Activated T-helper 1 cell treated with anti-CD3 and anti-CD28 coated beads, Interleukin-12 subunit alpha, Interleukin-12 subunit beta, Interleukin-2, Interleukin-4 antibody, amounts not matched to agents 30 ng/mL and 10 ng/mL and 1 ng/mL, durations not matched to agents 14 hours and 24 hours and 36 hours (primary cell): ENCODE measurements at regions of chr11 and their contacts with region 1.

Region 1: DNA sequence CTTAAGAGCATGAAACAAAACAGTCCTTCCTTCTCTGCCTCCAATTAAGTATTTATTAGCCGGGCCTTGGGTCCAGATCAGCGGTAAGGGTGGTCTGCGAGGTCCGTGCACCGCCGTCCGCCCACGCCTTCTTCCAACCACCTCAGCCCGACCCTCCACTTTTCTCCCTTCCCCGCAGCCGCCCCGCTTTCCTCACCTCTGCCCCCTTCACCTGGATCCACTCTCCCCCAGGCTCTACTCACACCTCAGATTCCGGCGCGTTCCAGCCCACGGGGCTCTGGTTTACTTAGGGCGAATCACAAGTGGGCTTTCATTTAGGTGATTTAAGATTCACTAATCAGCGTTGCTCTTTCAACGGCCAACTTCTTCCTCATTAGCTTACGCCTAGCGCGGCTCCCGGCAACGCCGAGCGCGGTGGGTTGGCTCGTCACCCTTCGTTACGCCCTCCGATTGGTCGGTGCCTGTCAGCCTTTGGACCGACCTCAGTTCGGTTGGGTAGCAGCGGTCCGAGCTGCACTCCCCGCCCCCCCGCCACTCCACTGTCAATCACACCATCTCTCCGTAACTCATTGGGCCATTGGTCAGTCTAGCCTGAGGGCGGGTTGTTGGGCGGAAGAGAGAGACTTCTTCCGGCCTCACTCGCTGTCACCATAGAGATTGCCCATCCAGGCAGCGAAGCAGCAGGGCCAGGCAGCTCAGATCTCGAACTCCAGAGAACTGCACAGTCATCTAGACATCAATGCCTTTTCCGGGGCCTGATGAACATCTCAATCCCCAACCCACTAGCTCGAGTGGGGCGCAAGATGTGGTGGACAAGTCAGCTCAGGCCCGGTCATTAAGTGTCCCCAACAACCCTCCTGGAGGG is at the start of gene TMEM218:
- DNase-seq: peak; percentile 95
- H3K4me3 Mint-ChIP-seq: peak within 1 kb of the TSS; percentile 94
- H3K27ac Mint-ChIP-seq: peak within 1 kb of the TSS; percentile 95
- H3K4me1 Mint-ChIP-seq: peaks cover 17% of the 10 kb centered on the region
- H3K27me3 Mint-ChIP-seq: peaks cover 2% of the 10 kb centered on the region
- total RNA-seq, gene TMEM218: 14.6 and 18.0 TPM in 2 replicates

Region 2: GRCh38 chr11:124673333-124674167 is 438.0 kb before region 1 on chr11 and contains the starts of genes SIAE and SPA17:
- intact Hi-C with region 1: loop called (anchors 1 kb)
- DNase-seq: peak; percentile 86
- H3K4me3 Mint-ChIP-seq: peak within 1 kb of the TSS; percentile 89
- H3K27ac Mint-ChIP-seq: peak within 1 kb of the TSS; percentile 89
- H3K4me1 Mint-ChIP-seq: peaks cover 29% of the 10 kb centered on the region
- H3K27me3 Mint-ChIP-seq: peaks cover 5% of the 10 kb centered on the region
- total RNA-seq, gene SIAE: 4.9 and 5.2 TPM in 2 replicates
- total RNA-seq, gene SPA17: 1.7 and 2.4 TPM in 2 replicates

Region 3: DNA sequence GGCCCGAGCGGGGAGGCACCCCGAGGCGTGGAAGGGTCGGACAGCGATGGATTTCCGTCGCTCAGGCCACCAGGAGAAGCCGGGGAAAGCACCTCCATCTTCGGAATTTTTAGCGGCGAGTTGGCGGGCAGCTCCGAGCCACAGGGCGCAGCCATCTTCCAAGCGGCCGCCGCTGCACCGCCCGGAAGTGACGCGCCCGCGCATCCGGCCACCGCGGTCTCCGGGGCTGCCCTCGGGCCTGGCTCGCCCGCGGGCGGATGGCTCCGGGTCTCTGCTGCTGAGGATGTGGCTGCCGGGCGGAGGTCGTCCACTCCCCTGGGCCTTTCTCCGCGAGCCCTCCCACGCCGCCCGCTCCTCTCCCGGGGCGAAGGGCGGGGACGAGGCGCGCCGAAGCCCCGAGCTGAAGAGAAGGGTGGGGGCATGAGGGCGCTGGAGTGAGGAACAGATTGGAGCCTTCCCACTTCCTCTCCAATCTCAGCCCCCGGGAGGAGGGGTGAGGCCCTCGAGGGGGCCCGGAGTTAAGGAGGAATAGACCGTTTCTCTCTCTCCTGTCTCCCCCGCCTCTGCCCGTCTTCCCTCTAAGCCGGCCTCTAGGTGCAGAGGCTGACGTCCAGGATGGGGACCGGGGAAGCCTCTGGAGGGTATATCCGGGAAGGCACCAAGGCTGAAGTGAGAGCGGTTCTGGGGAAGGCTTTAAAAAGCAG is 311.2 kb before region 1 on chr11 and contains the start of gene MSANTD2:
- intact Hi-C with region 1: loop called (anchors 2 kb)
- DNase-seq: peak; percentile 79
- H3K4me3 Mint-ChIP-seq: peak within 1 kb of the TSS; percentile 91
- H3K27ac Mint-ChIP-seq: peak within 1 kb of the TSS; percentile 92
- H3K4me1 Mint-ChIP-seq: peaks cover 28% of the 10 kb centered on the region
- H3K27me3 Mint-ChIP-seq: peaks cover 8% of the 10 kb centered on the region
- total RNA-seq, gene MSANTD2: 8.9 and 9.7 TPM in 2 replicates

Region 4: GRCh38 chr11:124953753-124954589 is 157.6 kb before region 1 on chr11 and contains the start of gene CCDC15:
- intact Hi-C with region 1: loop called (anchors 1 kb)
- DNase-seq: peak; percentile 95
- H3K4me3 Mint-ChIP-seq: no peak within 1 kb of the TSS
- H3K27ac Mint-ChIP-seq: no peak within 1 kb of the TSS
- H3K4me1 Mint-ChIP-seq: no peaks in the 10 kb centered on the region
- H3K27me3 Mint-ChIP-seq: no peaks in the 10 kb centered on the region
- total RNA-seq, gene CCDC15: 3.1 and 3.4 TPM in 2 replicates

Region 5: GRCh38 chr11:125141686-125142535 is 30.3 kb after region 1 on chr11:
- intact Hi-C with region 1: loop called (anchors 1 kb)
- DNase-seq: peak; percentile 23
- H3K4me3 Mint-ChIP-seq: no peak overlapping the region
- H3K27ac Mint-ChIP-seq: no peak overlapping the region
- H3K4me1 Mint-ChIP-seq: no peaks in the 10 kb centered on the region
- H3K27me3 Mint-ChIP-seq: peaks cover 24% of the 10 kb centered on the region

Region 6: DNA sequence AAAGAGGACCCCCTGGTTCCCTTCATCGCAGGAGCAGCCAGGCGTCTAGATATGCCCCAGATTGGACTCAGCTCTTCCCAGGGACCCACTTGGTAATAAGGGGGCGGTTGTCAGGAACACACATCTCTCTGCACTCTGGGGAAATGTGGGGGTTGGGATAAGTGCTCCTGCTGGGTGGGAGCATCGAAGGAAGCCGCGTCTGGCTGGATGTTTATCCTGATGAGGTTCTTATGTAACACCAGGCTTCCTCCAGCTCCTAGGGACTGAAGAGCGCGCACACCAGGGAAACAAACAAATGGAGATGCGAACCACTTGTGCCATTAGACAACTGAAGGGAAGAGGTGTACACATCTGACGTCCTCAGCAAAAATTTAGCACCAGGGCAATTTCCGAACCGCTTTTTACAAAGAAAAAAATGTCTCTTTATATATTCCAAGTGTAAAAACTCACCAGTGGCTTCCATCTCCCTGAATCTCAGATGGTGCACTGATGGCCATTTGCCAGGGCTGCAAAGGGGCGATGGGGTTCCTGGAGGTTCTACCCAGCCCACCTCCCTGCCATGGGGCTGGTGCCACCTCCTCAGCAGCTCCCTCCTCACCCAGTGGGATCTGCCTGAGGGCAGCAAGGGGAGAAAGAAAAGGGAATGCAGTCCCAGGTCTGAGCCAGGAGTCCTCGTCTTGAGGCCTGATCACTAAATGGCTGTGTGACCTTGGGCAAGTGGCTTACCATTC is 142.4 kb after region 1 on chr11:
- intact Hi-C with region 1: no loop called
- DNase-seq: no peak
- H3K4me3 Mint-ChIP-seq: no peak overlapping the region
- H3K27ac Mint-ChIP-seq: no peak overlapping the region
- H3K4me1 Mint-ChIP-seq: no peaks in the 10 kb centered on the region
- H3K27me3 Mint-ChIP-seq: no peaks in the 10 kb centered on the region

Region 7: DNA sequence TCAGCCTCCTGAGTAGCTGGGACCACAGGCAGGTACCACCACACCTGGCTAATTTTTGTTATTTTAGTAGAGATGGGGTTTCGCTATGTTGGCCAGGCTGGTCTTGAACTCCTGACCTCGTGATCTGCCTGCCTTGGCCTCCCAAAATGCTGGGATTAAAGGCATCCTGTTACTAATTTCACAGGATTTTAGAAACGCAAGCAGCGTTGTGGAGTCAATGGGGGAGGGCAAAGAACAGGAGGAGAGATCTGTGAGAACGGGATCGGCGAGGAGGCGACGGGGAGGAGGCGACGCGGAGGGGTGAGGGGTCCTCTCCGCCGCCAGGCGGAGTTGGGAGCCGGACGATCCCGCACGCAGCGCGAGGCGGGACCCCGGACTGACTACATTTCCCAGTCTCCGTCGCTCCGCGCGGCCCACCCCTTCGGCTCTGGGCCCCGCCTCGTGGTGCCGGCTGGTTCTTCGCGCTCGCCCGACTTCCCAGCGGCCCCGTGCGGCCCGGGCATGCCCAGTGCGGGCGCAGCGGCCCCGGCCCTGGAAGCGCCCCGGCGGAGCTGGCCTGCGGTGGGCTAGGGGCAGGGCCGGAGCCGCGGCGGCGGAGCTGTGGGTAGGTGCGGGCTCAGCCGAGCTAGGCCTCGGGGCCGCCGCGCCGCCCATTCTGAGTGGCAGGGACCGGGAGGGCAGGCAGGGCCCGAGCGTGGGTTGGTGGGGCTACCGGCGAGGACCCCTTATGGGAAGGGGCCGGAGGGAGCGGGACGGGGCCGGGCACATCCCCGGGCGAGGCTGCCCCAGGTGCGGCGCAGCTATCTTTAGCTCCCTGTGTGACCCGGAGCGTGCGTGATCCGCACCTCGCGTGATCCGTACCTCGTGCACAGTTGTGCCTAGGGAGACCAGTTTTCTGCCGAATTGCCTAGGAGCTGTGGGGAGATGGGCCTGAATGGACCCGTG is 457.7 kb after region 1 on chr11 and contains the start of gene EI24:
- intact Hi-C with region 1: loop called (anchors 1 kb)
- DNase-seq: peak; percentile 88
- H3K4me3 Mint-ChIP-seq: peak within 1 kb of the TSS; percentile 95
- H3K27ac Mint-ChIP-seq: peak within 1 kb of the TSS; percentile 94
- H3K4me1 Mint-ChIP-seq: peaks cover 23% of the 10 kb centered on the region
- H3K27me3 Mint-ChIP-seq: no peaks in the 10 kb centered on the region
- total RNA-seq, gene EI24: 61.6 and 62.4 TPM in 2 replicates

Region 8: GRCh38 chr11:126062679-126063506 is 951.3 kb after region 1 on chr11 and contains the start of gene CDON:
- intact Hi-C with region 1: loop called (anchors 2 kb)
- DNase-seq: peak; percentile 90
- H3K4me3 Mint-ChIP-seq: peak within 1 kb of the TSS; percentile 84
- H3K27ac Mint-ChIP-seq: peak within 1 kb of the TSS; percentile 96
- H3K4me1 Mint-ChIP-seq: peaks cover 9% of the 10 kb centered on the region
- H3K27me3 Mint-ChIP-seq: peaks cover 38% of the 10 kb centered on the region
- total RNA-seq, gene CDON: 1.3 and 1.8 TPM in 2 replicates